B cell (primary cell): ENCODE measurements at regions of chr16 and their contacts with region 1.

Region 1: DNA sequence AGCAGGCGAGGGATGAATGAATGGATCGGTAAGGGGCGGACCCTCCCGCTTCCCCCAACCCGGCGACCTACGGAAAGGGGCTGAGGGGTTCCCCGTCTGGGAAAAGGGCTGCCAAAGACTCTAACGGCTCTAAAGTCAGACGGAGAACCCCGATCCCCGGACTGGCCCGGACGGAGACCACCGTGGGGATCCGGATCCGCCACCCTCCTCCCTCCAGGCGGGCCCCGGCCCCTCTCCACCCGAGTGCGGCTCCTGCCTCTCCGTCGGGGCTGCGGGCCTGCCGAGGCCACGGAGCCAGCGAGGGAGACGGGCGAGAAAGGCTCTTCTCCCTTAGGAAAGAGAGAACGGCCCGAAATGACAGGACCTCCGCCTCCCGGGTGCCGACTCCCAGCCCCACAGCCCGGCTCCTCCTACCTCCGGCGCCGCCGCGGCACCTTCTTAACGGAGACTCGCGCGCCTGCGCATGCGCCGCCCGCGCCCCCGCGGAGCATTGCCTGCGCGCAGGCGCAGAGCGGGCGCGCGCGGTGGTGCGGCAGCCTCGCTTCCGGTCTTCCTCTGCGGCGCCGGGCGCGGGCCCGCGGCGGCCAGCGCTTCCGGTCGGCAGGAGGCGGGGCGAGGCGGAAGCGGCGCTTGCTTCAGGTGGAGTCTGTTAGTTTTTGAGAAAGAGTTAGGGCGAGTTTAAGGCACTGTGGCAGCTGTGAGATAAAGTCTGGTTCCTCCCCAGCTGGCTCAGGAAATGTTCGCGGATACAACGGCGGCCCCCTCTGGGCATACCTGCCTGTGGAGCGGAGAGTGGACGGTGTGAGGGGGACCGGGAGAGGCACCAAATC is at the start of gene SLX4:
- DNase-seq: peak; percentile 96
- ATAC-seq: peak; percentile 86
- H3K4me3 ChIP-seq: peak within 1 kb of the TSS; percentile 75 to 89 (median 84)
- H3K4me3 Mint-ChIP-seq: peak within 1 kb of the TSS; percentile 99
- H3K27ac ChIP-seq: peak within 1 kb of the TSS; percentile 72 to 88
- H3K27ac Mint-ChIP-seq: peak within 1 kb of the TSS; percentile 98
- H3K4me1 ChIP-seq: peaks cover 30 to 38% of the 10 kb centered on the region in 2 donors
- H3K4me1 Mint-ChIP-seq: peaks cover 61% of the 10 kb centered on the region
- H3K27me3 ChIP-seq: no peaks in the 10 kb centered on the region
- H3K27me3 Mint-ChIP-seq: no peaks in the 10 kb centered on the region
- CTCF ChIP-seq: no peak
- total RNA-seq, gene SLX4: 13.3 and 14.4 TPM in 2 replicates

Region 2: GRCh38 chr16:2500918-2501750 is 1110.2 kb before region 1 on chr16:
- CTCF ChIA-PET with region 1: no interaction called
- POLR2A ChIA-PET with region 1: no interaction called
- intact Hi-C with region 1: no loop called
- DNase-seq: peak; percentile 86
- ATAC-seq: peak; percentile 97
- H3K4me3 ChIP-seq: no peak overlapping the region
- H3K4me3 Mint-ChIP-seq: no peak overlapping the region
- H3K27ac ChIP-seq: no peak overlapping the region
- H3K27ac Mint-ChIP-seq: no peak overlapping the region
- H3K4me1 ChIP-seq: peaks cover 0 to 8% of the 10 kb centered on the region in 2 donors
- H3K4me1 Mint-ChIP-seq: peaks cover 11% of the 10 kb centered on the region
- H3K27me3 ChIP-seq: no peaks in the 10 kb centered on the region
- H3K27me3 Mint-ChIP-seq: no peaks in the 10 kb centered on the region
- CTCF ChIP-seq: peak; percentile 99

Region 3: GRCh38 chr16:3503523-3503922 is 107.8 kb before region 1 on chr16:
- CTCF ChIA-PET with region 1: no interaction called
- POLR2A ChIA-PET with region 1: no interaction called
- intact Hi-C with region 1: loop called (anchors 1 kb)
- DNase-seq: no peak
- ATAC-seq: no peak
- H3K4me3 ChIP-seq: no peak overlapping the region
- H3K4me3 Mint-ChIP-seq: peak overlapping the region; percentile 32
- H3K27ac ChIP-seq: no peak overlapping the region
- H3K27ac Mint-ChIP-seq: no peak overlapping the region
- H3K4me1 ChIP-seq: peaks cover 11 to 22% of the 10 kb centered on the region in 2 donors
- H3K4me1 Mint-ChIP-seq: peaks cover 30% of the 10 kb centered on the region
- H3K27me3 ChIP-seq: no peaks in the 10 kb centered on the region
- H3K27me3 Mint-ChIP-seq: no peaks in the 10 kb centered on the region
- CTCF ChIP-seq: no peak

Region 4: GRCh38 chr16:3577302-3577752 is 34.0 kb before region 1 on chr16 and contains the start of gene NLRC3:
- CTCF ChIA-PET with region 1: no interaction called
- POLR2A ChIA-PET with region 1: no interaction called
- intact Hi-C with region 1: loop called (anchors 1 kb)
- DNase-seq: peak; percentile 54
- ATAC-seq: peak; percentile 23
- H3K4me3 ChIP-seq: peak within 1 kb of the TSS; percentile 63 to 93 (median 79)
- H3K4me3 Mint-ChIP-seq: peak within 1 kb of the TSS; percentile 96
- H3K27ac ChIP-seq: peak within 1 kb of the TSS; percentile 71 to 89
- H3K27ac Mint-ChIP-seq: peak within 1 kb of the TSS; percentile 97
- H3K4me1 ChIP-seq: peaks cover 45 to 57% of the 10 kb centered on the region in 2 donors
- H3K4me1 Mint-ChIP-seq: peaks cover 59% of the 10 kb centered on the region
- H3K27me3 ChIP-seq: no peaks in the 10 kb centered on the region
- H3K27me3 Mint-ChIP-seq: no peaks in the 10 kb centered on the region
- CTCF ChIP-seq: no peak
- total RNA-seq, gene NLRC3: 35.7 and 39.6 TPM in 2 replicates

Region 5: DNA sequence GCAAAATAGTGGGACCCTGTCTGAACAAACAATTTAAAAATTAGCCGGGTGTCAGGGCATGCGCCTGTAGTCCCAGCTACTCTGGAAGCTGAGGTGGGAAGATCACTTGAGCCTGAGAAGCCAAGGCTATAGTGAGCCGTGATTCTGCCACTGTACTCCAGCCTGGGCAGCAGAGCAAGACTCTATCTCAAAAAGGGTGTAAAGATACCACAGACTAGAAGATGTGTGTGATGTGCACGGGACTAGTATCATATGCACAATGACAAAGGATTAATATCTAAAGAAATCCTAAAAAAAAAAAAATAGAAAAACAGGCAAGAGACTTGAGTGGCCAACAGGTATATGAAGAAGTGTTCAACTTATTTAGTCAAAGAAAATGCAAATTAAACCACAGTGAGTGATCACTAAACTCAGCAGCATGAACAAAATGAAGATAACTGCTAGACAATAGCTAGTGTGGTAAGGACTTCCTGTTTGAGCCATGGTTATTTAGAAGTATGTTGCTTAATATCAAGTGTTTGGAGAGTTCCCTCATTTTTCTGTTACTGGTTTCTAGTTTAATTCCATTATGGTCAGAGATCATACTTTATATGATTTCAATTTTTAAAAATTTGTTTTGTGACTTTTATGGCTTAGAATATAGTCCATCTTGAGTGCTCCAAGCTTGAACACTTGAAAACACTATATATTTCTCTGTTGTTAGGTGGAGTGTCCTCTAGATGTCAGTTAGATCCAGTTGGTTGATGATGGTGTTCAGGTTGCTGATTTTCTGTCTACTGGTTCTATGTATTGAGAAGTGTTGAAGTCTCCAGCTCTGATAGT is 14.8 kb after region 1 on chr16:
- CTCF ChIA-PET with region 1: interaction called, 3 read pairs
- POLR2A ChIA-PET with region 1: no interaction called
- intact Hi-C with region 1: loop called (anchors 2 kb)
- DNase-seq: peak; percentile 56
- ATAC-seq: peak; percentile 69
- H3K4me3 ChIP-seq: no peak overlapping the region
- H3K4me3 Mint-ChIP-seq: peak overlapping the region; percentile 71
- H3K27ac ChIP-seq: peak overlapping the region; percentile 25 to 69
- H3K27ac Mint-ChIP-seq: peak overlapping the region; percentile 90
- H3K4me1 ChIP-seq: peaks cover 32 to 46% of the 10 kb centered on the region in 2 donors
- H3K4me1 Mint-ChIP-seq: peaks cover 42% of the 10 kb centered on the region
- H3K27me3 ChIP-seq: no peaks in the 10 kb centered on the region
- H3K27me3 Mint-ChIP-seq: no peaks in the 10 kb centered on the region
- CTCF ChIP-seq: no peak

Region 6: GRCh38 chr16:3961449-3961849 is 350.1 kb after region 1 on chr16:
- CTCF ChIA-PET with region 1: no interaction called
- POLR2A ChIA-PET with region 1: no interaction called
- intact Hi-C with region 1: no loop called
- DNase-seq: no peak
- ATAC-seq: no peak
- H3K4me3 ChIP-seq: no peak overlapping the region
- H3K4me3 Mint-ChIP-seq: no peak overlapping the region
- H3K27ac ChIP-seq: no peak overlapping the region
- H3K27ac Mint-ChIP-seq: no peak overlapping the region
- H3K4me1 ChIP-seq: peaks cover 11 to 15% of the 10 kb centered on the region in 2 donors
- H3K4me1 Mint-ChIP-seq: peaks cover 18% of the 10 kb centered on the region
- H3K27me3 ChIP-seq: peaks cover 0 to 22% (median 3%) of the 10 kb centered on the region in 4 experiments
- H3K27me3 Mint-ChIP-seq: peaks cover 34% of the 10 kb centered on the region
- CTCF ChIP-seq: no peak